ENCODE measurements at regions of chr10 and their contacts with region 1.

Region 1: DNA sequence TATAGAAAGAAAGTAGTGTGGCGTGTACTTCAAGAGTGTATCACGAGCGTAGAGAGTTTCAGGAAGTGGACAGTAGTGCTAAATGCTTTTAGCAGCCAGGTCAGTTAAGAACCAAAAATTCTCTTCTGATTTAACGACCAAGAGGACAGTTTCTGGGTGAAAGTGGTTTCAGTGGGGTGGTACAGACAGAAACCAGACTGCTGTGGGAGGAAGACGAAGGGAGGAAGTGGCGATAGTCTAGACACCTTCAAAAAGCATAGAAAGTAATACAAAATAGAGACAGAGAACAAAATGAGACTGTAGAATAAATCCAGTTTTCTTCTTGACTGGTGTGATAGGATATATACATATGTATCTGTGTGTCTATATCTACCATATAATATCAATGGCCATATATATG is 93.5 kb downstream of the MBL2 start:
- DNase-seq: no peak
- ATAC-seq: no peak
- H3K4me3 ChIP-seq: no peak overlapping the region
- H3K27ac ChIP-seq: no peak overlapping the region
- H3K4me1 ChIP-seq: peaks cover 29% of the 10 kb centered on the region
- H3K27me3 ChIP-seq: no peaks in the 10 kb centered on the region
- CTCF ChIP-seq: no peak

Region 2: DNA sequence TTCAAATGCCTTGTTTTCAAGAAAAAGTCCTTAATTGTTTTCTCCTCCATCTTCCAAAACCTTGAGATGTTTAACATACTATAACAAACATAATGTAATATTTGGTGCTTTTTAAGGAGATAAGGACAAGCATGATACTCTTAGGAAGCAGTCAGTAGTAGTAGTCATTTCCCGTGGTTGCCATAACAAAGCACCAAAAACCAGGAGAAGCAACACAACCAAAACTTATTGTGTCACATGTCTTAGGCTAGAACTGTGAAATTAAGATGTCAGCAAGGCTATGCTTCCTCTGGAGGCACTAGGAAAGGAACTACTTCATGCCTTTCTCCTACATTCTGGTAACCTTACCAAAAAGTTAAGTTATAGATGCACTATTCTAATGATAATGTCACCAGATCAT is 13.3 kb before region 1 on chr10:
- CTCF ChIA-PET with region 1: no interaction called
- POLR2A ChIA-PET with region 1: no interaction called
- intact Hi-C with region 1: loop called (anchors 2 kb)
- DNase-seq: no peak
- ATAC-seq: no peak
- H3K4me3 ChIP-seq: no peak overlapping the region
- H3K27ac ChIP-seq: no peak overlapping the region
- H3K4me1 ChIP-seq: no peaks in the 10 kb centered on the region
- H3K27me3 ChIP-seq: no peaks in the 10 kb centered on the region
- CTCF ChIP-seq: no peak